ENCODE measurements at regions of chr2 and their contacts with region 1.

Region 1: GRCh38 chr2:26561918-26562810 is 79.0 kb downstream of the CIB4 start:
- DNase-seq: no peak
- ATAC-seq: peak; percentile 10; the same call in 1 of the 2 replicates
- H3K4me3 ChIP-seq: peak overlapping the region; percentile 53
- H3K27ac ChIP-seq: no peak overlapping the region
- H3K4me1 ChIP-seq: peaks cover 10% of the 10 kb centered on the region; the same call in 1 of the 2 replicates
- H3K27me3 ChIP-seq: peaks cover 91% of the 10 kb centered on the region
- CTCF ChIP-seq: no peak

Region 2: GRCh38 chr2:26139269-26140183 is 422.6 kb before region 1 on chr2:
- CTCF ChIA-PET with region 1: no interaction called
- POLR2A ChIA-PET with region 1: no interaction called
- intact Hi-C with region 1: no loop called
- DNase-seq: peak; percentile 29
- ATAC-seq: peak; percentile 12; the same call in 1 of the 2 replicates
- H3K4me3 ChIP-seq: no peak overlapping the region
- H3K27ac ChIP-seq: no peak overlapping the region
- H3K4me1 ChIP-seq: peaks cover 11% of the 10 kb centered on the region
- H3K27me3 ChIP-seq: no peaks in the 10 kb centered on the region
- CTCF ChIP-seq: no peak

Region 3: DNA sequence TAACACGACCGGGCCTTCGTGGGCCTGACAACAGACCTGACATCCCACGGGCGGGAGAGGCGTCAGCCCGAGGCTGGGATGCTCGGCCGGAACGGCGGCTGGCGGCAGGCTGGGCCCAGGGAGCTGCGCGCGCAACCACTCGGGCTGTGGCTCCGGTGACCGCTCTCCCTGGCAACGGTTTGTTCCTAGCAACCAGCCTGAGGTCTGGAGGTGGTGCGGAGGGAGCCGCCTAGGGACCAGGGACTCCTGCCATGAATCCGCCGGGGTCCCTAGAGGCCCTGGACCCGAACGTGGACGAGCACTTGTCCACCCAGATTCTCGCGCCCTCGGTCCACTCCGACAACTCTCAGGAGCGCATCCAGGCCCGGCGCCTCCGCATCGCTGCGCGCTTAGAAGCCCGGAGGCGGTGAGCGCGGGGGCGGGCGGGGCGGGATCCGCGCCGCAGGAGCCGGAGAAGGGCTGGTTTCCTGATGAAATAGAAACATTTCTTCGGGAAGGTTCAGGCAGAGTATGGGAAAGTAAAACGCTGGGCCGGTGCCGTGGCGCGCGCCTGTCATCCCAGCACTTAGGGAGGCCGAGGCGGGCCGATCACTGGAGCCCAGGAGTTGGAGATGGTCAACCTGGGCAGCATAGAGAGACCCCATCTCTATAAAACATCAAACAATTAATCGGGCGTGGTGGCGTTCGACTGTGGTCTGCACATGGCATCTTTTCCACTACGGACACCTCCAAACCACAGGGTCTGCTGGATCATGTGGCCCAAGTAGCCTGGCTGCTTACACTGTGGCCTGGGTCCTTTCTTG is 160.2 kb before region 1 on chr2 and contains the start of gene DRC1:
- CTCF ChIA-PET with region 1: no interaction called
- POLR2A ChIA-PET with region 1: interaction called, 18 read pairs
- intact Hi-C with region 1: no loop called
- DNase-seq: no peak
- ATAC-seq: no peak
- H3K4me3 ChIP-seq: no peak within 1 kb of the TSS
- H3K27ac ChIP-seq: no peak within 1 kb of the TSS
- H3K4me1 ChIP-seq: no peaks in the 10 kb centered on the region
- H3K27me3 ChIP-seq: no peaks in the 10 kb centered on the region
- CTCF ChIP-seq: no peak
- total RNA-seq, gene DRC1: not detected in 2 replicates

Region 4: DNA sequence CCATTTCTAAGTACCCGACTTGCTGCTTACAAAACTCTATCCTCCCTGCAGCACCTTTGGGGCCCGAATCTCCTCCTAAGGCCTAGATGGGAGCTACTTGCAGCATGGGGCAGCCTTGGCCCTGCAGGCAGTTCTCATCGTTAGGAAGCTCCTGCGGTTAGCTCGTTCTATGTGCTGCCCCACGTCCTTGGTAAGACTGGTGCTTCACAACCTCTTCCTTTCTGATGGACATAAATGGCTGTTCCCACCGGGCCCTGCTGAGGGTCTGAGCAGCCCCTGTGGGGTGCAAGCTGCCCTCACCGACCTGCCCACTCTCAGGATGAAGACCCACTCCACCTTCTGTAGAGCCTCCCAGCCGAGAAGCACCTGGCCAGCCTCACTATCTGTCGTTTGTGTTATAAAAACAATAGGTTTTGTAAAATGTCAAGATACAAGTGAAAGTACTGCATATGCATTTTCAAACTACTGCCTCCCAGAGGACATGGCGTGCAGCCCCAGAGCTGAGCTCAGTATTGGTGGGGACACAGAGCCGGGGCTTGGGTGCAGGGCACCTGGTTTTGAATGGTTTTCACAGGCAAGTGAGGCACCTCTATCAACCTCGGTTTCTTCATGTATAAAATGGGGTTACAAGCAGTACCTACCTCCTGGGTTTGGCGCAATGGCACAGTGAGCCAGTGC is 103.7 kb before region 1 on chr2:
- CTCF ChIA-PET with region 1: interaction called, 13 read pairs
- POLR2A ChIA-PET with region 1: no interaction called
- intact Hi-C with region 1: no loop called
- DNase-seq: no peak
- ATAC-seq: no peak
- H3K4me3 ChIP-seq: no peak overlapping the region
- H3K27ac ChIP-seq: no peak overlapping the region
- H3K4me1 ChIP-seq: peaks cover 5% of the 10 kb centered on the region; the same call in 1 of the 2 replicates
- H3K27me3 ChIP-seq: no peaks in the 10 kb centered on the region
- CTCF ChIP-seq: 0 out of 2 replicates have a peak, but pooled peaks have one; percentile 10

Region 5: GRCh38 chr2:26469092-26469710 is 93.0 kb before region 1 on chr2:
- CTCF ChIA-PET with region 1: no interaction called
- POLR2A ChIA-PET with region 1: no interaction called
- intact Hi-C with region 1: no loop called
- DNase-seq: peak; percentile 91
- ATAC-seq: peak; percentile 76
- H3K4me3 ChIP-seq: no peak overlapping the region
- H3K27ac ChIP-seq: no peak overlapping the region
- H3K4me1 ChIP-seq: no peaks in the 10 kb centered on the region
- H3K27me3 ChIP-seq: no peaks in the 10 kb centered on the region
- CTCF ChIP-seq: peak; percentile 91

Region 6: DNA sequence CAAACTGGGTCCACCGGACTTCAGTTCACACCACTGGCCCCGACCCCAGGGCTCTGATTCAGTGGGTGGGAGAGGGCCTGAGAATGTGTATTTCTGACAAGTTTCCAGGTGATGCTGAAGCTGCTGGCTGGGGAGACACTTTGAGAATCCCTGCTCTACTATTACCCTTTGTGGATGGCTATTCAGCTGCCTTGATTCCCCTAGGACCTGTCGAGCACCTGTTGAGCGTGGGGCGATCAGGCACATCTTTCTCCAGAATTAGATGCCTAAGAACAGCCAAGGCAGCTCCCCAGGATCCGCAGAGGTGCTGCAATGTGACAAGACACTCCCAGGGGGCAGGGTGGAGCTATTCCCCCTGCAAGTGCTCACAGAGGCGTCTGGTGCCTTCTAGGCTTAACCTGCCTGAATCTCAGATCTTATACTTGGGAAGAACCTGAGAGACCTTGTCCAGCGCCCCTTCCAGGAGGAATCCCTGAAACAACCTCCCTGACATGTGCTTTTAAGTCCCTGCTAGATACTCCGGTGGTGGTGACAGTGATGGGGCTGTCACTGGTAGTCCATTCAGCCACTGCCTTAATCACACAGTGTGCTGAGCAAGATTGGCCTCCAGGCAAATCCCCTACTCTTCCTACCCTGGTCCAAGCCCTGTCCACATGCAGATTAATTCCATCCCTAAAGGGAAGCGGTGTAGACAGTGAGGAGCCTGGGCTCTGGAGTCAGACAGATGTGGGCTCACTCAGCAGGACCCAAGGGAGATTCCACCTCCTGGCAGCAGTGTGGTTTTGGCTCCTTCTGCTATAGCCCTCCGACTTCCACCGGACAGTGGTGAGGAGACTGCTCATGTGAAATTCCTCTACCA is 40.9 kb before region 1 on chr2:
- CTCF ChIA-PET with region 1: no interaction called
- POLR2A ChIA-PET with region 1: no interaction called
- intact Hi-C with region 1: no loop called
- DNase-seq: peak; percentile 44
- ATAC-seq: peak; percentile 80
- H3K4me3 ChIP-seq: no peak overlapping the region
- H3K27ac ChIP-seq: no peak overlapping the region
- H3K4me1 ChIP-seq: 0 out of 2 replicates have a peak, but pooled peaks cover under 1% of the 10 kb centered on the region
- H3K27me3 ChIP-seq: peaks cover 36% of the 10 kb centered on the region
- CTCF ChIP-seq: peak; percentile 61

Region 7: GRCh38 chr2:26550276-26550950 is 11.8 kb before region 1 on chr2:
- CTCF ChIA-PET with region 1: no interaction called
- POLR2A ChIA-PET with region 1: no interaction called
- intact Hi-C with region 1: no loop called
- DNase-seq: no peak
- ATAC-seq: no peak
- H3K4me3 ChIP-seq: no peak overlapping the region
- H3K27ac ChIP-seq: no peak overlapping the region
- H3K4me1 ChIP-seq: no peaks in the 10 kb centered on the region
- H3K27me3 ChIP-seq: peaks cover 25% of the 10 kb centered on the region
- CTCF ChIP-seq: no peak